ENCODE measurements at regions of chr7 and their contacts with region 1.

Region 1: GRCh38 chr7:4849369-4849768 is 12.5 kb downstream of the PAPOLB start:
- DNase-seq: peak; percentile 10
- ATAC-seq: peak; percentile 83
- H3K4me3 ChIP-seq: no peak overlapping the region
- H3K27ac ChIP-seq: no peak overlapping the region
- H3K4me1 ChIP-seq: no peaks in the 10 kb centered on the region
- H3K27me3 ChIP-seq: 0 out of 2 replicates have a peak, but pooled peaks cover 3% of the 10 kb centered on the region
- CTCF ChIP-seq: peak; percentile 77

Region 2: GRCh38 chr7:4906682-4907081 is 57.3 kb after region 1 on chr7:
- CTCF ChIA-PET with region 1: no interaction called
- POLR2A ChIA-PET with region 1: no interaction called
- in situ Hi-C with region 1: no loop called
- intact Hi-C with region 1: no loop called
- DNase-seq: no peak
- ATAC-seq: no peak
- H3K4me3 ChIP-seq: no peak overlapping the region
- H3K27ac ChIP-seq: no peak overlapping the region
- H3K4me1 ChIP-seq: no peaks in the 10 kb centered on the region
- H3K27me3 ChIP-seq: peaks cover 2% of the 10 kb centered on the region; the same call in 1 of the 2 replicates
- CTCF ChIP-seq: no peak

Region 3: GRCh38 chr7:5083311-5083711 is 233.9 kb after region 1 on chr7:
- CTCF ChIA-PET with region 1: no interaction called
- POLR2A ChIA-PET with region 1: interaction called, 3 read pairs
- in situ Hi-C with region 1: no loop called
- intact Hi-C with region 1: loop called (anchors 5 kb)
- DNase-seq: no peak
- ATAC-seq: no peak
- H3K4me3 ChIP-seq: no peak overlapping the region
- H3K27ac ChIP-seq: no peak overlapping the region
- H3K4me1 ChIP-seq: no peaks in the 10 kb centered on the region
- H3K27me3 ChIP-seq: peaks cover 3% of the 10 kb centered on the region; the same call in 1 of the 2 replicates
- CTCF ChIP-seq: no peak

Measured in Panc1 (cell line).